ENCODE measurements at regions of chr17 and their contacts with region 1.

Region 1: DNA sequence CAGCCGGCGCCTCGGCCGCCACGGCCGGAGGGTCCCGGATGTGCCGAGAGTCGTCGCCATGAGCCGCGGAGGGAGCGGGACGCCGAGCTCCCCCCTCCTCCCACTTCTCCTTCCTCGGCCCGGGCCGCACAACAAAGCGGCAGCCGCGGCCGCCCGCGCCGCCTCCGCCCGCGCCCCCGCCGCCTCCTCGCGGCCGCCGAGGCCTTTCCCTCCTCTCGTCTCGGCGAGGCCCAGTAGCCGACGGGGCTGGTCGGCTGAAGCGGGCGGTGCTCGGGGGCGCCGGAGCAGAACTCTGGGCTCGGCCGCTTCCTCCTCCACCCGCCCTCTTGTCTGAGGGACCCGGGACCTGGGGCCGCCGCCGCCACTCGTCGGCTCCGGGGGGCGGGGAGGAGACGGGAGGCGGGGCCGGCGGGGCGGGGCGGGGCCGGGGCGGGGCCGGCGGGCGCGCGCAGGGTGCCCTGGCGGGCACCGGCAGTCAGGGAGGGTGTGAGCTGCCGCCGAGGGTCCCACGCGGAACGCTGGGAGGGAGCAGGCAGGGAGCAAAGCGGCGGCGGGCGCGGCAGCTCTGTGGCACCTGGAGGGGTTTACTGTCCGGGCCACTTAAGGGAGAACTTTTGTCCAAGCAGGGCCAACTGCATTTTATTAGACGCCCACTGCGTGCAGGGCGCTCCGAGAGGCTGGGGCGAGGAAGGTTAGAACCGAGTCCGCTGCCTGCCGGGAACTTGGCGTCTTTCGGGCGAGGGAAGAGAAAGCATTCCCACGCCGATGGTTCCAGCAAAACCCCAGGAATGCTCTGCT is at the start of gene SMURF2:
- DNase-seq: peak; percentile 71 to 90 (median 83)
- ATAC-seq: peak; percentile 82 to 83
- H3K4me3 Mint-ChIP-seq: peak within 1 kb of the TSS; percentile 96 to 99 (median 98)
- H3K27ac Mint-ChIP-seq: peak within 1 kb of the TSS; percentile 89 to 98 (median 96)
- H3K4me1 Mint-ChIP-seq: peaks cover 12 to 45% (median 33%) of the 10 kb centered on the region in 4 donors
- H3K27me3 Mint-ChIP-seq: no peaks in the 10 kb centered on the region
- polyA plus RNA-seq, gene SMURF2: 6.1 to 11.0 (median 8.0) TPM

Region 2: DNA sequence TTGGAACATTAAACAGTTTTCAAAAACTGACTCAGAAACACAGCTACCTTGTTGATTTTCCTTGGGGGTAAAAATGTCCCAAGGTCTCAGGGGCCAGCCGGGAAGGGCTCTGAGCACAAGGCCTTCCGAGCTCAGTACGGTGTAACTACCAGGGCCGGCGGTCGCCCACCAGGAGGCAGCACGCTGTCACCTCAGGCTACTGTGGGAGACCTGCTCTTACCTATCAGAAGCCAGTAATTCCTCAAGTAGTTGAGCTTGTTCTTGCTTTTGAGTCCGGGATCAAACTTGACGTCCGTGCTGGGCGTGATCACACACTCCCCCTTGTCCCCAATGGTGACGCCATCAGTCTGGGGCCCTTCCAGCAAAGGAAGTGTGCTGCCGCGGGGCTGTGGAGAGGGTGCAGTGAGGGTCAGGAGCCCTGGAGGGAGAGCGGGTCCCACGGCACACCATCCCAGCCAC is 598.4 kb before region 1 on chr17:
- POLR2A ChIA-PET with region 1: no interaction called
- DNase-seq: peak in 9 of 10 donors; percentile 45 to 77 (median 51)
- ATAC-seq: peak; percentile 77 to 91
- H3K4me3 Mint-ChIP-seq: peak overlapping the region in 5 of 10 donors; percentile 28 to 73 (median 30)
- H3K27ac Mint-ChIP-seq: peak overlapping the region in 6 of 10 donors; percentile 21 to 94 (median 70)
- H3K4me1 Mint-ChIP-seq: peaks cover 4 to 85% (median 45%) of the 10 kb centered on the region in 4 donors
- H3K27me3 Mint-ChIP-seq: no peaks in the 10 kb centered on the region

Region 3: GRCh38 chr17:64635647-64636307 is 26.4 kb before region 1 on chr17:
- POLR2A ChIA-PET with region 1: no interaction called
- DNase-seq: no peak
- ATAC-seq: no peak
- H3K4me3 Mint-ChIP-seq: no peak overlapping the region
- H3K27ac Mint-ChIP-seq: peak overlapping the region in 3 of 10 donors; percentile 17 to 44 (median 21)
- H3K4me1 Mint-ChIP-seq: peaks cover 26 to 70% (median 64%) of the 10 kb centered on the region in 4 donors
- H3K27me3 Mint-ChIP-seq: no peaks in the 10 kb centered on the region

Region 4: GRCh38 chr17:64709481-64709880 is 47.3 kb after region 1 on chr17:
- POLR2A ChIA-PET with region 1: interaction called, 10 read pairs
- DNase-seq: no peak
- ATAC-seq: no peak
- H3K4me3 Mint-ChIP-seq: peak overlapping the region in 7 of 10 donors; percentile 54 to 78 (median 75)
- H3K27ac Mint-ChIP-seq: peak overlapping the region in 7 of 10 donors; percentile 58 to 90 (median 85)
- H3K4me1 Mint-ChIP-seq: peaks cover 31 to 79% (median 74%) of the 10 kb centered on the region in 4 donors
- H3K27me3 Mint-ChIP-seq: no peaks in the 10 kb centered on the region